Sigmoid colon (tissue), 7 donors: ENCODE measurements at regions of chrX and their contacts with region 1.

Region 1: DNA sequence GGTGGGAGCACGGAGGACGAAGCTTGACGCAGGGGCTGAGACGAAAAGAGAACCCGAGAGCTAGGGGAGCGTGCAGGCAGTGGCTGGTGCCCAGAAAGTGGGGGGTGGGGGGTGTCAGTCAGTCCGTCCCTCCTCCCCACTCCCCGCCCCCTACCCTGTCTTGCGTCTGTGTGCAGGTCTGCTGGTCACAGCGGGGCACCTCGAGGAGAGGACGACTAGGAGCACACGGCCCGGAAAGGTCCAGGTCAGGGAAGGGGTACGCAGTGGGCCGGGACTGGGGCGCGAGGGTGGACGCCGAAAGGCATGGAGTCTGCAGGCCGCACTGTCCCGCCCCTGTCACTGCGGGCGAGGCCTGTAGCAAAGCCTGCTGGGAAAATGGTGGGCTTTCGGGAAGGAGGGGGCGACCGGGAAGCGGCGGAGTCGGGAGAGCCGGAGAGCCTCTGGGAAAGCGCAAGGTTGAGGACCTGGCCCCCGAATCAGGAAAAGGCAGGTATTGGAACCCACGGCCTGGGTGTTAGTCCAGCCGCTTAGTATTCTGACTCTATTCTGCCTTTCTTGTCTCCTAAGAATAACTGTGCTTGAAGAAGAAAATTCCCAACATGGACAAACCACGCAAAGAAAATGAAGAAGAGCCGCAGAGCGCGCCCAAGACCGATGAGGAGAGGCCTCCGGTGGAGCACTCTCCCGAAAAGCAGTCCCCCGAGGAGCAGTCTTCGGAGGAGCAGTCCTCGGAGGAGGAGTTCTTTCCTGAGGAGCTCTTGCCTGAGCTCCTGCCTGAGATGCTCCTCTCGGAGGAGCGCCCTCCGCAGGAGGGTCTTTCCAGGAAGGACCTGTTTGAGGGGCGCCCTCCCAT is 769 bp downstream of the TCEAL1 start:
- DNase-seq: peak; percentile 83
- H3K4me3 ChIP-seq: peak overlapping the region; percentile 46 to 65 (median 60)
- H3K27ac ChIP-seq: peak overlapping the region; percentile 89 to 95 (median 92)
- H3K4me1 ChIP-seq: peaks cover 0 to 17% (median 3%) of the 10 kb centered on the region in 4 donors
- H3K27me3 ChIP-seq: no peaks in the 10 kb centered on the region
- CTCF ChIP-seq: peak in 2 of 4 experiments; percentile 15 to 30
- EP300 ChIP-seq: no peak
- POLR2A ChIP-seq: peak; percentile 15 to 21

Region 2: GRCh38 chrX:103503163-103503852 is 126.2 kb before region 1 on chrX:
- intact Hi-C with region 1: no loop called
- DNase-seq: no peak
- H3K4me3 ChIP-seq: no peak overlapping the region
- H3K27ac ChIP-seq: no peak overlapping the region
- H3K4me1 ChIP-seq: no peaks in the 10 kb centered on the region
- H3K27me3 ChIP-seq: no peaks in the 10 kb centered on the region
- CTCF ChIP-seq: no peak
- EP300 ChIP-seq: no peak
- POLR2A ChIP-seq: no peak

Region 3: GRCh38 chrX:103585411-103586313 is 43.9 kb before region 1 on chrX and contains the start of gene TCEAL4:
- intact Hi-C with region 1: loop called (anchors 2 kb)
- DNase-seq: peak; percentile 85
- H3K4me3 ChIP-seq: peak within 1 kb of the TSS; percentile 47 to 65 (median 64)
- H3K27ac ChIP-seq: peak within 1 kb of the TSS; percentile 87 to 92 (median 88)
- H3K4me1 ChIP-seq: peaks cover 0 to 13% (median 0%) of the 10 kb centered on the region in 4 donors
- H3K27me3 ChIP-seq: no peaks in the 10 kb centered on the region
- CTCF ChIP-seq: no peak
- EP300 ChIP-seq: no peak
- POLR2A ChIP-seq: peak; percentile 52 to 64
- total RNA-seq, gene TCEAL4: 127 to 366 (median 178) TPM

Region 4: GRCh38 chrX:103607364-103608305 is 21.9 kb before region 1 on chrX and contains the start of gene TCEAL3:
- intact Hi-C with region 1: loop called (anchors 2 kb)
- DNase-seq: peak; percentile 82
- H3K4me3 ChIP-seq: peak within 1 kb of the TSS; percentile 60 to 76 (median 72)
- H3K27ac ChIP-seq: peak within 1 kb of the TSS; percentile 90 to 95 (median 90)
- H3K4me1 ChIP-seq: no peaks in the 10 kb centered on the region
- H3K27me3 ChIP-seq: no peaks in the 10 kb centered on the region
- CTCF ChIP-seq: no peak
- EP300 ChIP-seq: no peak
- POLR2A ChIP-seq: peak; percentile 24 to 40
- total RNA-seq, gene TCEAL3: 55.3 to 68.3 (median 61.4) TPM